H1 (cell line): ENCODE measurements at regions of chr1 and their contacts with region 1.

Region 1: DNA sequence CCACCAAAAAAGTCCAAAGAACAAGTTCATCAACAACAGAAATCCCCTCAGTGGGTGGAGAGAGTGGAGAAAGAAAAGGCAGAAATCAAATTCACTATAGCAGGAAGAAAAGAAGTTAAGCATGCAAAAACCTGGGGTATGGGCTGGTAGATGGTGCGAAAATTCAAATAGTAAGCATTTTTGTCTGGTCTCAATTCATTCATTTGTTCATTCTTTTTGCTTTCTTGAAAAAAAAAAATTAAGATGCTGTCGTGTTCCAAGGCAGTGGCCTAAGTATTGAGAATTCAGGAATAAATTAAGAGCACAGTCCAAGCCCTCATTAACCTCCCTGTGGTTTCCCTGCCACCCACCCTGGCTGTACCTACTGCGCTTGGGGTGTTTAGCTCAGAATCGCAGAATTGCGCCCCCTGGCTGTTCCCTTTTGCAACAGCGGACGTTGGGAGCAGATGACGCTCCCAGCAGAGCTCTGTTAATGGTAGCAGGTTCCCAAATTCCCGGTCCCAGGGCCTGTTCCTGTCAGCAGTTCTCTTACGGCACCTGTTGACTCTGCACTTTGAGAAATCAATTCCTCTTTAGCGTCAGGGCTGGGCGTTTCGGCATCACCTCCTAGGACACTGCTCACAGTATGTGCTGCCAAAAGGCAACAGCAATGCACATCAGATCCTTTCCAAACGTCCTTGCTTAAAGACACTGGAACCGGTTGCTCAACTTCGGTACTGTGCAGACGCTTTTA is 34.0 kb upstream of the SSX2IP start:
- DNase-seq: peak; percentile 69 to 89
- H3K4me3 ChIP-seq: no peak overlapping the region
- H3K27ac ChIP-seq: no peak overlapping the region
- H3K4me1 ChIP-seq: peaks cover 0 to 5% (median 0%) of the 10 kb centered on the region in 4 experiments; a peak in 2 of 7 replicates
- H3K27me3 ChIP-seq: no peaks in the 10 kb centered on the region
- CTCF ChIP-seq: peak; percentile 89 to 93 (median 89)
- EP300 ChIP-seq: no peak
- POLR2A ChIP-seq: no peak
- RAD21 ChIP-seq: peak; percentile 69 to 78

Region 2: DNA sequence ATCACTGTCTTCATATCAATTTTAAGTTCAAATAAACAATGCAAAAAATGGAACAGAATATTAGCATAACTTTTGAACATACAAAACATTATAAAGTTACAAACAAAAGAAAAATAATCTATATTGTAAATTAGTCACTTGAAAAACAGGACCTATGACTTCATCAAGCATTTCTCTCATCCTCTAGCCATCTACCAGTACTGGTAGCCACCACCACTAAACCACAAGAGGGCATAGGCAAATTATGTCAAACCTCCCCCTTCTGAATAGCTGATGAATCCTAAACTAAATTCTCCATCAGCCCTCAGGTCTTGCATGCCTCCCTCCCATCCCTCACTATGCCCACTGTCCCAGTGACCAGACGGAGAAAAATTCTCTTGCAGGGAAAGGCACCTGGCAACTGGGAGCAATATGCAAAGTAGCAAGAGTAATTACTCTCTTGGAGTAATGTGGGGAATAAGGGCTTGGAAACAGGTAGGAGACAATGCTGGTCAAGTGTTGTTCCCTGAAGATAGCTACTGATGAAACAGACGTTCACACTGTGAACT is 71.1 kb before region 1 on chr1:
- CTCF ChIA-PET with region 1: interaction called, 14 read pairs
- POLR2A ChIA-PET with region 1: no interaction called
- DNase-seq: no peak
- H3K4me3 ChIP-seq: no peak overlapping the region
- H3K27ac ChIP-seq: no peak overlapping the region
- H3K4me1 ChIP-seq: no peaks in the 10 kb centered on the region
- H3K27me3 ChIP-seq: no peaks in the 10 kb centered on the region
- CTCF ChIP-seq: peak in 1 of 3 experiments; percentile 10; a peak in 2 of 4 replicates
- EP300 ChIP-seq: no peak
- POLR2A ChIP-seq: no peak
- RAD21 ChIP-seq: peak in 1 of 2 experiments; percentile 21; a peak in 2 of 4 replicates

Region 3: DNA sequence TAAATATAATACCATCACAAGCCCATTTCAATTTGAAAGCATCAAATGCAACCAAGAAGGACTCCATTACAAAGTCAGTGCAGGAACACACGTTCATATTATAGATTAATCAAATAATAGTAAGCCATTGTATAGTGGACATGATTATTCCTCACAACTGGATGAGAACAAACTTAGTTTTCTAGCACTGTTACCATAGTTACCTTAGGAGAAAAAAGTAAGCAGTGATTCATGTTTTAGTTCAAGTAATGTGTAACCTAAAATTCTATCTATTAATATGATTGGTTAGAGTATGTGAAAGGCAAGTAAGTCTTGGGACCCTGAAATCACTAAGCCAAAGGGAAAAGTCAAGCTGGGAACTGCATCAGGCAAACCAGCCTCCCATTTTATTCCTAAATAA is 49.2 kb before region 1 on chr1:
- CTCF ChIA-PET with region 1: interaction called, 23 read pairs
- POLR2A ChIA-PET with region 1: no interaction called
- DNase-seq: no peak
- H3K4me3 ChIP-seq: peak overlapping the region in 1 of 4 experiments; percentile 21; a peak in 2 of 8 replicates
- H3K27ac ChIP-seq: no peak overlapping the region
- H3K4me1 ChIP-seq: peaks cover 0 to 18% (median 8%) of the 10 kb centered on the region in 4 experiments; a peak in 4 of 7 replicates
- H3K27me3 ChIP-seq: no peaks in the 10 kb centered on the region
- CTCF ChIP-seq: no peak
- EP300 ChIP-seq: no peak
- POLR2A ChIP-seq: no peak
- RAD21 ChIP-seq: no peak

Region 4: DNA sequence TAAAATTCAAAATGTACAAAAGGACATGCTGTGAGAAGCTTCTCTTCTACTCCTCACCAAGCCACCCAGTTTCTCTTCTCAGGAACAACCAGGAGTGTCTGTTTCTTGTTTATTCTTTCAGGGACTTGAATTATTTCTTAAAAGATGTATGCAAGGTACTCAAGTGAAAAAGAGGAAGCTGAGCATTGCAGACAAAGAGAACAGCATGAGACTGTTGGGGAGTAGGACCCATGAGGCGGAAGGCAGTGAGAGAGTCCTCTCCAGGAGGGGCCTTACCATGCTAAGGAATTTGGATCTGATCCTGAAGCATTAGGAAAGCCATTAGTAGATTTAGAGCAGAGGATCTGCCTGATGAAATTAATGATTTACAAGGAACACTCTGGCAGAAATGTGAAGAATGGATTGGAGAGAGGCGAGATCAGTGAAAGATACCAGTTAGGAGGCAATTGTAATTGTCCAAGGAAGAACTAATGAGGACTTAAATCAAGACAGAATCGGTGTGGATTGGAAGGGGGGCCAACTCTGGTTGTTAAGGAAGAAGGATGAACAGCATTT is 19.3 kb before region 1 on chr1:
- CTCF ChIA-PET with region 1: interaction called, 58 read pairs
- POLR2A ChIA-PET with region 1: no interaction called
- DNase-seq: no peak
- H3K4me3 ChIP-seq: no peak overlapping the region
- H3K27ac ChIP-seq: no peak overlapping the region
- H3K4me1 ChIP-seq: peaks cover 0 to 7% (median 1%) of the 10 kb centered on the region in 4 experiments; a peak in 6 of 7 replicates
- H3K27me3 ChIP-seq: no peaks in the 10 kb centered on the region
- CTCF ChIP-seq: no peak
- EP300 ChIP-seq: no peak
- POLR2A ChIP-seq: no peak
- RAD21 ChIP-seq: no peak

Region 5: DNA sequence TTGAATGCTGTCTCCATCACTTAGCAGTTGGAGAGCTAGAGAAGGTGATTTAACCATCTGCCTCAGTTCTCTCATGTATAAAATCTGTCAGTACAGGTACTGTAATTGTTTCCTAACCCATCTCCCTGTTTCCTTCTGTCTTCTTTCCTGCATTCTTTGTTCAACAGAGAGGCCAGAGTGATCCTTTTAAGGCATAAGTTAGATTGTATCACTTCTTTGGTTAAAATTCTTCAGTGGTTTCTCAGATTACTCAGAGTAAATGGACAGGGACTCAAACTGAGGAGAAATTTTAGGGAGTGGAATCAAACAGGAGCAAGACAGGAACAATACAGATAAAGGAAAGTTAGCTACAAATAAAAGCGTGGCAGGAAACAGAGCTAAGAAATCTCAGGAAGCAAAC is 11.2 kb after region 1 on chr1:
- CTCF ChIA-PET with region 1: interaction called, 50 read pairs
- POLR2A ChIA-PET with region 1: interaction called, 3 read pairs
- DNase-seq: no peak
- H3K4me3 ChIP-seq: no peak overlapping the region
- H3K27ac ChIP-seq: no peak overlapping the region
- H3K4me1 ChIP-seq: peaks cover 0 to 14% (median 4%) of the 10 kb centered on the region in 4 experiments; a peak in 4 of 7 replicates
- H3K27me3 ChIP-seq: no peaks in the 10 kb centered on the region
- CTCF ChIP-seq: no peak
- EP300 ChIP-seq: no peak
- POLR2A ChIP-seq: no peak
- RAD21 ChIP-seq: no peak

Region 6: DNA sequence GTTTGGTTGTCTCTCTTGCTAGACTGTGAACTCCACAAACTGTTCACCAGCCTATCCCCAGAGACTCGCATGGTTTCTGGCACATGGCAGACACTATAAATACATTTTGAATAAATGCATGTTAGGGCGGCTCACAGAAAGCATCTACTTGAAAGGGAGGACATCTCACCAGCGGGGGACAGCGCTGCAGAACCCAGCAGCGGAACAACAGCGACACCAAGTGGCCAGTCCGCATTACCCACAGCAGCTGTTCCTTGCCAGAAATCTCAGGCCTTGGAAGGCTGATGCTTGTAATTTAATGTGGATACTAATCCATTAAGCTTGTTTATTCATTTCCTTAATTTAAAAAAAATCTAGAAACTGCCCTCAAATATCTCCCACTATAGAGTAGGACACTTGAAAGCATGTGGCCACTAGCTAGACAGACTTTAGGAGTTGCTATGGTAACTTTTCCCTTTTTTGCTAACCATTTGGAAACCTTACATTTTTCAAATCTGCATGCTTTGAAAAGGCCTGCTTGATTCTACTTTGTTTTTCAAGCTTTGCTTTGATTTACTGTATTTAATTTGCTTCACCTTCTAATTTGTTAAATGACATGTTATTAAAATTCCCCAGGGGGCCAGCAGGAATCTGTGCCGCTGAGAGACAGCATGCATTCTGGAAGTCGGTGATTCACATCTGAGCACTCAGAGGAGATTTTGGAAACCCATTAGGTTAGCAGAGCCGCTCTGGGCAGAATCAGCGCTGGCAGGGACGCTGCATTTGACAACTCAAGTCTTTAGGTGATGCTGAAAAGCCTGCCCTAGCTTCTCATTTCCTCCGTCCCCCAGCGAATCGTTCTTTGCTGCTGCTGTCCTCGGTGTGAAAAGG is 29.5 kb after region 1 on chr1:
- CTCF ChIA-PET with region 1: interaction called, 23 read pairs
- POLR2A ChIA-PET with region 1: no interaction called
- DNase-seq: peak; percentile 59 to 85
- H3K4me3 ChIP-seq: no peak overlapping the region
- H3K27ac ChIP-seq: no peak overlapping the region
- H3K4me1 ChIP-seq: peaks cover 0 to 12% (median 2%) of the 10 kb centered on the region in 4 experiments; a peak in 4 of 7 replicates
- H3K27me3 ChIP-seq: no peaks in the 10 kb centered on the region
- CTCF ChIP-seq: peak; percentile 95 to 96 (median 96)
- EP300 ChIP-seq: no peak
- POLR2A ChIP-seq: no peak
- RAD21 ChIP-seq: peak; percentile 99 to 100